Activated T-helper 1 cell treated with anti-CD3 and anti-CD28 coated beads, Interleukin-12 subunit alpha, Interleukin-12 subunit beta, Interleukin-2, Interleukin-4 antibody, amounts not matched to agents 30 ng/mL and 10 ng/mL and 1 ng/mL, durations not matched to agents 14 hours and 24 hours and 36 hours (primary cell): ENCODE measurements at regions of chr11 and their contacts with region 1.

Region 1: GRCh38 chr11:48055292-48056132 is 75.2 kb downstream of the PTPRJ start:
- DNase-seq: peak; percentile 81
- H3K4me3 Mint-ChIP-seq: peak overlapping the region; percentile 56
- H3K27ac Mint-ChIP-seq: peak overlapping the region; percentile 84
- H3K4me1 Mint-ChIP-seq: peaks cover 91% of the 10 kb centered on the region
- H3K27me3 Mint-ChIP-seq: no peaks in the 10 kb centered on the region

Region 2: DNA sequence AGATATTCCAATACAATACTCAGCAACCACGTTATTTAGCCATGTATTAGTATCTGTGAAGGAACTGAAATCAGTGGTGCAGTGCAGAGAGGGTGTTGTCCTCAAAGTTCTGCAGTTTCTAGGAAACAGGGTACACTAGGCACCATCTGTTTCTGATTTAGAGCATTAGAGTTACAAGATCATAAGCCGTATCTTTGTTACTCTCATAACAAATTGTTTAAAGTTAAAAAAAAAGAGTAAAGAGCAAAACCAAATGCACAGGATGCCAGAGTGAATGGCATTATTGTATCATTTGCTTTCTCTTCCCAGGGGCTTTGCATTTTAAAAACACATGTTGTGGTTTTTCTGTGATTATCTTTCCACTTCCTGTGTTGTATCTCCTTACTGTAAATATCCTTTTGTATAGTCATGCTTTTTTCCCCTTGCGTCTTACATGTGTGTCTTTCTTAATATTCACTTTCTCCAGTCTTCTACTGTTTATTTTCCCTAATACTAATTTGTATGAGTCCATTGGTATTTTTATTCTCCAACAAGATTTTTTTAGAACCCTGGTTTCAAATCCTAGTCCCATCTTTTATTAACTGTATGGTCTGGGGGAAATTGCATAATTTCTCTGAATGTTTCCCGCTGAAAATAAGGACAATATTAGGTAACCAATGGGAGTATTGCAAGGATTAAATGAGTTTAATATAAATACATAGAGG is 192.2 kb before region 1 on chr11:
- intact Hi-C with region 1: loop called (anchors 5 kb)
- DNase-seq: no peak
- H3K4me3 Mint-ChIP-seq: peak overlapping the region; percentile 57
- H3K27ac Mint-ChIP-seq: peak overlapping the region; percentile 21
- H3K4me1 Mint-ChIP-seq: peaks cover 33% of the 10 kb centered on the region
- H3K27me3 Mint-ChIP-seq: no peaks in the 10 kb centered on the region

Region 3: DNA sequence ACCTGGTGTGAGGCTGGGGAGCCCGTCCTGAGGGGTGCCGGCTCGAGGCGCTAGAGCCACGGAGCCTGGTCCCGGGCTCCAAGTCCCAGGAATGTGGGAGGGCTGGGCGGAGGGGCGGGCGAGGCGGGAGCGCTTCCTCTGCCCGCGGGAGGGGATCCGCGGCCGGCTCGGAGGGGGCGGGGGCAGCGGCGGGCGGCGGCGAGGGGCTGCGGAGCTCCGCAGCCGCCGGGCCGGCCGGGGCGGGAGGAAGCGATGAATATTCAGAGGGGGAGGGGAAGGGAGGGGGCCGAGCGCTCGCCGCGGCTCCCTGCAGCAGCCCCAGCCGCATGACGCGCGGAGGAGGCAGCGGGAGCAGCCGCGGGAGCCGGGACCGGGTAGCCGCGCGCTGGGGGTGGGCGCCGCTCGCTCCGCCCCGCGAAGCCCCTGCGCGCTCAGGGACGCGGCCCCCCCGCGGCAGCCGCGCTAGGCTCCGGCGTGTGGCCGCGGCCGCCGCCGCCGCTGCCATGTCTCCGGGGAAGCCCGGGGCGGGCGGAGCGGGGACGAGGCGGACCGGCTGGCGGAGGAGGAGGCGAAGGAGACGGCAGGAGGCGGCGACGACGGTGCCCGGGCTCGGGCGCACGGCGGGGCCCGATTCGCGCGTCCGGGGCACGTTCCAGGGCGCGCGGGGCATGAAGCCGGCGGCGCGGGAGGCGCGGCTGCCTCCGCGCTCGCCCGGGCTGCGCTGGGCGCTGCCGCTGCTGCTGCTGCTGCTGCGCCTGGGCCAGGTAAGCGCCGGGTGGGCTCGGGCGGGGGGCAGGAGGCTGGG is 75.1 kb before region 1 on chr11 and contains the start of gene PTPRJ:
- intact Hi-C with region 1: loop called (anchors 1 kb)
- DNase-seq: peak; percentile 60
- H3K4me3 Mint-ChIP-seq: peak within 1 kb of the TSS; percentile 92
- H3K27ac Mint-ChIP-seq: peak within 1 kb of the TSS; percentile 54
- H3K4me1 Mint-ChIP-seq: peaks cover 26% of the 10 kb centered on the region
- H3K27me3 Mint-ChIP-seq: peaks cover 12% of the 10 kb centered on the region
- total RNA-seq, gene PTPRJ: 69.6 and 70.3 TPM in 2 replicates

Region 4: GRCh38 chr11:48073031-48073861 is 17.7 kb after region 1 on chr11:
- intact Hi-C with region 1: loop called (anchors 2 kb)
- DNase-seq: no peak
- H3K4me3 Mint-ChIP-seq: no peak overlapping the region
- H3K27ac Mint-ChIP-seq: peak overlapping the region; percentile 51
- H3K4me1 Mint-ChIP-seq: peaks cover 42% of the 10 kb centered on the region
- H3K27me3 Mint-ChIP-seq: no peaks in the 10 kb centered on the region

Region 5: DNA sequence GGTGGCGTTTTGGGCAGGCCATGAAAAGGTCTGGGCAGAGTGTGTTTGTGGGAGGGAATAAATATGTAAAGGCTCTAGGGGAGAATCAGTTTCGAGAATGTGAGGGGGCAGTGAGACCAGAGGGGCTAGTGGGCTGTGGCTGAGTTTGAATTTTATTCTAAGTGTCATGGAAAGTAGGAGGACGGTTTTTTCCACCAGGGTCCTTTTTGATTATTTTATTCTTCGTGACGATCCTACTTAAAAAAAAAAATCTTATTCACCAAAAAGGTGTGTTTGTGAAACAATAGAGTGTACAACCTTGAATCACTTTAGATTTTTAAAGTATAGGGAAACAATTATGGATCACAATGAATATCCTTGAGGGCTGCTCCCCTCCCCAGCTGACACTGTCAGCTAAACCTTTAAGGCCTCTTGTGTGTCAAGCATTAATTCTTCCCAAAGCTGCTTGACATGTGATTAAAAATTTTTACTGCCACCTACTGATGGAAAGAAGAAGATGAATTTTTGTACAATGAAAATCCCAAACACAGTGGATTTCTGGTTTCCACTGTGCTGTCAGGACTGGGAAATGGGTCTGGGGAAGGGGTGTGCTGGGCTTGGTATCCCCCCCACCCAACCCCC is 53.6 kb after region 1 on chr11:
- intact Hi-C with region 1: loop called (anchors 1 kb)
- DNase-seq: no peak
- H3K4me3 Mint-ChIP-seq: peak overlapping the region; percentile 54
- H3K27ac Mint-ChIP-seq: peak overlapping the region; percentile 88
- H3K4me1 Mint-ChIP-seq: peaks cover 68% of the 10 kb centered on the region
- H3K27me3 Mint-ChIP-seq: no peaks in the 10 kb centered on the region

Region 6: DNA sequence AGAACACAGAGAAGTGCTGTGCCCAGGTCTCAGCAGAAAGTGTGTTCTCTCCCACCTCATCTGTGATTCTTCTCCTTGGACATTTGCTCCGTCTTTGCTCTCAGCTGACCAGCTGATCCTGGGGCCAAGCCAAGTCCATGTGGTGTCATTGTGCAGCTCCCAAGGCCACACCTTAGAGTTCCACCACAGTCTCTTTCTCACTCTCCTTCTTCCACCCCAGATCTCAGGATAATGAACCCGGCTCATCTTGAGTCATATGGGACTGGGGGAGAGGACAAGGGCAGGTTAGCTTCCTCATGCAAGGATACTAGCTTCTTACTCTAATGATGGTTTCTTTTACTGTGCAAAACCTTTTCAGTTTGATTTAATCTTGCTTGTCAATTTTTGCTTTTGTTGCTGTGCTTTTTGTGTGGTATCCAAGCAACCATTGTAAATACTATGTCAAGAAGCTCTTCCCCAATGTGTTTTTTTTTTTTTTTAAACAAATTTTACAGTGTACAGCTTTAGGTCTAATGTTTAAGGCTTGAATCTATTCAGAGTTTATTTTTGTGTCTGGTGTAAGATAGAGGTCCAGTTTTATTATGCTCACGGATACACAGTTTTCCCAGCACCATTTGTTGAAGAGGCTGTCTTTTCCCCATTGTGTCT is 86.1 kb after region 1 on chr11:
- intact Hi-C with region 1: no loop called
- DNase-seq: no peak
- H3K4me3 Mint-ChIP-seq: no peak overlapping the region
- H3K27ac Mint-ChIP-seq: peak overlapping the region; percentile 34
- H3K4me1 Mint-ChIP-seq: peaks cover 21% of the 10 kb centered on the region
- H3K27me3 Mint-ChIP-seq: no peaks in the 10 kb centered on the region